Colonic mucosa (tissue), 4 donors: ENCODE measurements at regions of chr1 and their contacts with region 1.

Region 1: GRCh38 chr1:44377925-44378784 is 23.1 kb upstream of the ERI3 start:
- DNase-seq: peak; percentile 26
- H3K4me3 ChIP-seq: no peak overlapping the region
- H3K27ac ChIP-seq: no peak overlapping the region
- H3K4me1 ChIP-seq: no peaks in the 10 kb centered on the region
- H3K27me3 ChIP-seq: no peaks in the 10 kb centered on the region
- CTCF ChIP-seq: peak; percentile 48

Region 2: DNA sequence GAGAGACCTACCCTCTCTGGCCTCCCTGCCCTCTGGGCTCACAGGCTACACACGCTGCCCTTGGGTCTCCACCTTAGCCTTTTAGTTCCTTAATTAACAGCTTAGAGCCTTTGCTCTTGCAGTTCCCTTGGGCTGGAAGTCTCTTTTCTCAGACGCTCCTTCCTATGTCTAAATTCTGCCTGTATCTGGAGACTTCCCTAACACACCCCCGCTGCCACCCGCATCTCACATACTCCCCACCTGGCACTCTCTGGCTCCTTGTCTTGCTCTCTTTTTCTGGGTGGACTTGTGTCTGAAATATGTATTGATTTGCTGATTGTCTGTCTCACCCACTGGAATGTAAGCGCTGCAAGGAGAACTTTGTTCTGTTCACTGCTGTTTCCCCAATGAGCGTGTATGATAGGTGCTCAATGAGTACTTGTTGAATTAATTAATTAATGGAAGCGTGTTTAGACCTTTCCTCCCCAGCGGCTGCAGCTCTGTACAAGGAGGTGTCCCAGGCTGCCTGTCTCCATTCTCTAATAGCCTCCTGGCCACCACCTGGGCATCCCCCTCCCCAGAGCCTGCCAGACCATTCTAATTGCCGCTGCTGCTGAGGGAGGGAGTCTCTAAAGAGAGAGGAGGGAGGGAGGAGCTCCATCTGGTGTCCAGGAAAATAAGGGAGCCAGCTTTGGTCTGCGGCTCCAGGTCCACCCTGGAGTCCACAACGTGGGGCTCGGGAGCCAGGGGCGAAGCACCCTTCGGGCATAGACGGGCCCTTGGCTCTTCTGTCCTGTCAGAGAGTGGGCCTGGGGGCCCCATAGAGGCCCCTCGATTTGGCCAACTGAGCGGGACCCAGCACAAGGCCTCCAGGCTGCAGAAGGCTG is 122.3 kb after region 1 on chr1:
- intact Hi-C with region 1: no loop called
- DNase-seq: no peak
- H3K4me3 ChIP-seq: no peak overlapping the region
- H3K27ac ChIP-seq: no peak overlapping the region
- H3K4me1 ChIP-seq: no peaks in the 10 kb centered on the region
- H3K27me3 ChIP-seq: no peaks in the 10 kb centered on the region
- CTCF ChIP-seq: no peak

Region 3: GRCh38 chr1:44594871-44595746 is 217.0 kb after region 1 on chr1:
- intact Hi-C with region 1: loop called (anchors 2 kb)
- DNase-seq: peak; percentile 85
- H3K4me3 ChIP-seq: no peak overlapping the region
- H3K27ac ChIP-seq: no peak overlapping the region
- H3K4me1 ChIP-seq: no peaks in the 10 kb centered on the region
- H3K27me3 ChIP-seq: peaks cover under 1% of the 10 kb centered on the region
- CTCF ChIP-seq: peak; percentile 99